ENCODE measurements at regions of chr9 and their contacts with region 1.

Region 1: DNA sequence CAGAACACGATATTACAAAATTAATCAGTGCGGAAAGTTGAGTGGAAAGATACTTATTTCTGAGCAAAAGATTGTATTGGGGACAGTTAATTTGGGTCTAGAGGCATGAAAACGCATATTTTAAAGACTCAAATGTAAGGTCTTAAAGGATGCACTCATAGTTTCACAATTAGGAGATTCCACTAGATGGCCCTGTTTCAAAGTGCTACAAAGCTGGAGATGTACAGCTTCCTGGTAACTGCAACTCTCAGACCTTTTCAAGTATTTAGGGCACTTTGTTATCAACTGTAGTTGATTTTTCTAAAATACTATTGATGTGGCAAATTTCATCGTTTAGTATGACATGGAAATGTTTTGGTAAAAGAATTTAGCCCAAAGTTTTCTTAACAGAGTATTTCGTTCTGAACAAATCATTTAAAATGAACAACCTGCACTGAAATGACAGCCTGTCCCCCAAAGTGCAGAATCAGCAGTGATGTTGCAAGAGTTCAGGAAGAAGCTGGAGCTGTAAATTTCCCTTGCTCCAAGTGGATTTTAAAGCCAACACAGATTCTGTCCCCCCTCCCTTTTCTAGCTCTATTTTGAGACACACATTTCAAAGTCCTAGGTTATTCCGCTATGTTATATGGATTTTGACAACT is 16.2 kb upstream of the NDUFB6 start:
- DNase-seq: peak; percentile 73
- H3K4me3 ChIP-seq: no peak overlapping the region
- H3K27ac ChIP-seq: no peak overlapping the region
- H3K4me1 ChIP-seq: no peaks in the 10 kb centered on the region
- CTCF ChIP-seq: peak; percentile 94

Region 2: GRCh38 chr9:32603914-32604741 is 14.9 kb after region 1 on chr9:
- CTCF ChIA-PET with region 1: interaction called, 4 read pairs
- POLR2A ChIA-PET with region 1: interaction called, 15 read pairs
- intact Hi-C with region 1: no loop called
- DNase-seq: peak; percentile 85
- H3K4me3 ChIP-seq: peak overlapping the region; percentile 50
- H3K27ac ChIP-seq: peak overlapping the region; percentile 64
- H3K4me1 ChIP-seq: peaks cover 46% of the 10 kb centered on the region
- CTCF ChIP-seq: no peak

Region 3: GRCh38 chr9:32703635-32704034 is 114.4 kb after region 1 on chr9:
- CTCF ChIA-PET with region 1: interaction called, 3 read pairs
- POLR2A ChIA-PET with region 1: interaction called, 3 read pairs
- intact Hi-C with region 1: loop called (anchors 2 kb)
- DNase-seq: peak; percentile 33
- H3K4me3 ChIP-seq: no peak overlapping the region
- H3K27ac ChIP-seq: no peak overlapping the region
- H3K4me1 ChIP-seq: no peaks in the 10 kb centered on the region
- CTCF ChIP-seq: peak; percentile 61

Region 4: GRCh38 chr9:33076358-33077004 is 487.3 kb after region 1 on chr9 and contains the start of gene SMU1:
- CTCF ChIA-PET with region 1: no interaction called
- POLR2A ChIA-PET with region 1: no interaction called
- intact Hi-C with region 1: no loop called
- DNase-seq: peak; percentile 97
- H3K4me3 ChIP-seq: peak within 1 kb of the TSS; percentile 95
- H3K27ac ChIP-seq: peak within 1 kb of the TSS; percentile 54
- H3K4me1 ChIP-seq: peaks cover 26% of the 10 kb centered on the region
- CTCF ChIP-seq: no peak
- total RNA-seq, gene SMU1: 20.0 and 22.0 TPM in 2 replicates